ENCODE measurements at regions of chr7 and their contacts with region 1.

Region 1: GRCh38 chr7:17298207-17298839 is at the start of gene AHR:
- DNase-seq: peak; percentile 93 to 96
- H3K4me3 ChIP-seq: peak within 1 kb of the TSS; percentile 97
- H3K4me3 Mint-ChIP-seq: peak within 1 kb of the TSS; percentile 87
- H3K27ac Mint-ChIP-seq: peak within 1 kb of the TSS; percentile 91
- H3K4me1 ChIP-seq: peaks cover 13% of the 10 kb centered on the region; the same call in 1 of the 2 replicates
- H3K4me1 Mint-ChIP-seq: peaks cover 7% of the 10 kb centered on the region
- H3K27me3 ChIP-seq: no peaks in the 10 kb centered on the region
- H3K27me3 Mint-ChIP-seq: no peaks in the 10 kb centered on the region
- CTCF ChIP-seq: no peak
- total RNA-seq, gene AHR: 39.0 and 39.4 TPM in 2 replicates

Region 2: GRCh38 chr7:16891338-16891737 is 407.0 kb before region 1 on chr7:
- CTCF ChIA-PET with region 1: interaction called, 6 read pairs
- POLR2A ChIA-PET with region 1: no interaction called
- intact Hi-C with region 1: loop called (anchors 5 kb)
- DNase-seq: peak; percentile 64 to 74
- H3K4me3 ChIP-seq: no peak overlapping the region
- H3K4me3 Mint-ChIP-seq: no peak overlapping the region
- H3K27ac Mint-ChIP-seq: peak overlapping the region; percentile 35
- H3K4me1 ChIP-seq: peaks cover 31% of the 10 kb centered on the region
- H3K4me1 Mint-ChIP-seq: peaks cover 14% of the 10 kb centered on the region
- H3K27me3 ChIP-seq: no peaks in the 10 kb centered on the region
- H3K27me3 Mint-ChIP-seq: no peaks in the 10 kb centered on the region
- CTCF ChIP-seq: peak; percentile 46 to 75

Region 3: DNA sequence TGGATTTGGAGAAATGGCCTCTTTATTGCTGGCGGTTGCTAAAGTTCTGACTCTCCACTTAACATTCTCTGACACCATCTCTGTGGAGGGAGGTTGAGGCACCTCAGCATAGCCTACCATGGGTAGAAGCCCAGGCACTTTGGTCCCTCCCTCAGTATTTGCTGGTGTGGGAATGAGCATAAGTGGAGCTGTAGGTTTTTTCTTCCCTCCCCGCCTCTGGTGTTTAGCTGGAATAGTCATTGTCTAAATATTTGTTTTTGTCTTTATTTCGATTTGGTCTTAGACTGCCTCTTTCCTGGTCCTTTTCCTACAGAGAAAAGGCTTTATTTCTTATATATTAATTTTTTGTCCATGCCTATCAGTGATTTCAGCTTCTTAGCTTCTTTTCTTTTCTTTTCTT is 213.1 kb before region 1 on chr7:
- CTCF ChIA-PET with region 1: no interaction called
- POLR2A ChIA-PET with region 1: interaction called, 22 read pairs
- intact Hi-C with region 1: no loop called
- DNase-seq: no peak
- H3K4me3 ChIP-seq: no peak overlapping the region
- H3K4me3 Mint-ChIP-seq: no peak overlapping the region
- H3K27ac Mint-ChIP-seq: no peak overlapping the region
- H3K4me1 ChIP-seq: peaks cover 4% of the 10 kb centered on the region; the same call in 1 of the 2 replicates
- H3K4me1 Mint-ChIP-seq: peaks cover 8% of the 10 kb centered on the region
- H3K27me3 ChIP-seq: no peaks in the 10 kb centered on the region
- H3K27me3 Mint-ChIP-seq: no peaks in the 10 kb centered on the region
- CTCF ChIP-seq: no peak

Region 4: GRCh38 chr7:17205910-17206905 is 92.1 kb before region 1 on chr7:
- CTCF ChIA-PET with region 1: no interaction called
- POLR2A ChIA-PET with region 1: no interaction called
- intact Hi-C with region 1: loop called (anchors 1 kb)
- DNase-seq: peak; percentile 75 to 90
- H3K4me3 ChIP-seq: no peak overlapping the region
- H3K4me3 Mint-ChIP-seq: no peak overlapping the region
- H3K27ac Mint-ChIP-seq: peak overlapping the region; percentile 34
- H3K4me1 ChIP-seq: peaks cover 28% of the 10 kb centered on the region
- H3K4me1 Mint-ChIP-seq: peaks cover 16% of the 10 kb centered on the region
- H3K27me3 ChIP-seq: no peaks in the 10 kb centered on the region
- H3K27me3 Mint-ChIP-seq: no peaks in the 10 kb centered on the region
- CTCF ChIP-seq: no peak

Region 5: GRCh38 chr7:17506095-17506494 is 207.8 kb after region 1 on chr7:
- CTCF ChIA-PET with region 1: no interaction called
- POLR2A ChIA-PET with region 1: no interaction called
- intact Hi-C with region 1: loop called (anchors 5 kb)
- DNase-seq: peak; percentile 49 to 69
- H3K4me3 ChIP-seq: no peak overlapping the region
- H3K4me3 Mint-ChIP-seq: no peak overlapping the region
- H3K27ac Mint-ChIP-seq: no peak overlapping the region
- H3K4me1 ChIP-seq: peaks cover 32% of the 10 kb centered on the region
- H3K4me1 Mint-ChIP-seq: peaks cover 20% of the 10 kb centered on the region
- H3K27me3 ChIP-seq: no peaks in the 10 kb centered on the region
- H3K27me3 Mint-ChIP-seq: no peaks in the 10 kb centered on the region
- CTCF ChIP-seq: no peak

Region 6: GRCh38 chr7:17559388-17559787 is 261.1 kb after region 1 on chr7:
- CTCF ChIA-PET with region 1: no interaction called
- POLR2A ChIA-PET with region 1: no interaction called
- intact Hi-C with region 1: no loop called
- DNase-seq: no peak
- H3K4me3 ChIP-seq: no peak overlapping the region
- H3K4me3 Mint-ChIP-seq: peak overlapping the region; percentile 6
- H3K27ac Mint-ChIP-seq: peak overlapping the region; percentile 67
- H3K4me1 ChIP-seq: peaks cover 23% of the 10 kb centered on the region
- H3K4me1 Mint-ChIP-seq: peaks cover 24% of the 10 kb centered on the region
- H3K27me3 ChIP-seq: no peaks in the 10 kb centered on the region
- H3K27me3 Mint-ChIP-seq: no peaks in the 10 kb centered on the region
- CTCF ChIP-seq: no peak